CD14-positive monocyte (primary cell): ENCODE measurements at regions of chr20 and their contacts with region 1.

Region 1: GRCh38 chr20:38221119-38221589 is 39.4 kb downstream of the KIAA1755 start:
- DNase-seq: peak; percentile 55 to 68 (median 66)
- H3K4me3 ChIP-seq: no peak overlapping the region
- H3K4me3 Mint-ChIP-seq: peak overlapping the region; percentile 50 to 60
- H3K27ac ChIP-seq: no peak overlapping the region
- H3K27ac Mint-ChIP-seq: peak overlapping the region in 2 of 7 donors; percentile 59 to 63
- H3K4me1 ChIP-seq: peaks cover 20 to 22% of the 10 kb centered on the region in 2 donors
- H3K4me1 Mint-ChIP-seq: peaks cover 37% of the 10 kb centered on the region
- H3K27me3 ChIP-seq: no peaks in the 10 kb centered on the region
- H3K27me3 Mint-ChIP-seq: peaks cover 0 to 4% (median 3%) of the 10 kb centered on the region in 3 donors
- CTCF ChIP-seq: peak; percentile 93

Region 2: DNA sequence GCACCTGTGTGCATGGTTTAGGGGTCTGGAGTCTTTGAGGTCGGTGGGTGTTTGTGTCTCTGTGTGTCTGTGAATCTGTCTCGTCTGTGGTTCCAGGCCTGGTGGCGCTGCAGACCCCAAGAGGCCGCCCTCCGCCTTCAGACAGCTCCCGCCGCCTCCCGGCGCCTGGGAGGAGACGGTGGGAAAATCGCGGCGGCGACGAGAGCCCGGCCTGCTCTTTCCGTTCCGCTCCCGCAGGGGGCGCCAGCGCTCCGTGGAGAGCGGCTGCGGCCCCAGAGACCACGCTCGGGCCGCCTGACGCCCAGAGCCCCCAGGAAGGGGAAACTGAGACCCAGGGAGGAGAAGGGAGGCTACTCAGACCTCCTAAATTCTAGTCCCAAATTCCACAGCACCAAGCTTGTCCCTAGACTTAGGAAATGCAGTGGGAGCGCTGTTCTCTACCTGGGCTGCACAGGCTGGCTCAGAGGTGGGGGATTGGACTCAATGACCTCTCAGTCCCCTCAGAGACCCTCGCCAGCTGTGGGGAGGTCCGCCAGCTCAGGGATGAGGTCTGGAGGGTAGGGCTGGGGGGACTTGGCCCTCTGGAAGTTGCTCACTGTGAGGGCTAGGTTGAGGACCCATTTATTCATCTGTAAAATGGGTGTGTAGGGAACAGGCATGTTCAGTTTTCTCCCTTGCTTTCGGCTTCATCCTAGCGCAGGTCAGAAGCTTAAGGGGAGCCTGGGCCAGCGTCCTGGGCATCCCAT is 656.6 kb before region 1 on chr20:
- intact Hi-C with region 1: loop called in 1 of 2 experiments (anchors 5 kb)
- DNase-seq: peak in 2 of 3 donors; percentile 15 to 23
- H3K4me3 ChIP-seq: no peak overlapping the region
- H3K4me3 Mint-ChIP-seq: peak overlapping the region in 1 of 2 donors; percentile 68
- H3K27ac ChIP-seq: no peak overlapping the region
- H3K27ac Mint-ChIP-seq: no peak overlapping the region
- H3K4me1 ChIP-seq: no peaks in the 10 kb centered on the region
- H3K4me1 Mint-ChIP-seq: peaks cover 6% of the 10 kb centered on the region
- H3K27me3 ChIP-seq: peaks cover 9 to 38% of the 10 kb centered on the region in 2 donors
- H3K27me3 Mint-ChIP-seq: peaks cover 40 to 71% (median 41%) of the 10 kb centered on the region in 3 donors
- CTCF ChIP-seq: peak; percentile 93

Region 3: GRCh38 chr20:38033310-38034107 is 187.6 kb before region 1 on chr20 and contains the starts of genes RPRD1B and TTI1:
- intact Hi-C with region 1: no loop called
- DNase-seq: peak; percentile 82 to 90 (median 86)
- H3K4me3 ChIP-seq: peak within 1 kb of the TSS; percentile 64 to 93 (median 85)
- H3K4me3 Mint-ChIP-seq: peak within 1 kb of the TSS; percentile 94 to 95
- H3K27ac ChIP-seq: peak within 1 kb of the TSS; percentile 79 to 99
- H3K27ac Mint-ChIP-seq: peak within 1 kb of the TSS; percentile 95 to 100 (median 100)
- H3K4me1 ChIP-seq: peaks cover 30 to 41% of the 10 kb centered on the region in 2 donors
- H3K4me1 Mint-ChIP-seq: peaks cover 55% of the 10 kb centered on the region
- H3K27me3 ChIP-seq: no peaks in the 10 kb centered on the region
- H3K27me3 Mint-ChIP-seq: peaks cover 0 to 1% (median 0%) of the 10 kb centered on the region in 3 donors
- CTCF ChIP-seq: no peak
- polyA plus RNA-seq, gene RPRD1B: 3.6 to 12.3 (median 4.7) TPM
- polyA plus RNA-seq, gene TTI1: 6.4 to 9.1 (median 8.8) TPM

Region 4: DNA sequence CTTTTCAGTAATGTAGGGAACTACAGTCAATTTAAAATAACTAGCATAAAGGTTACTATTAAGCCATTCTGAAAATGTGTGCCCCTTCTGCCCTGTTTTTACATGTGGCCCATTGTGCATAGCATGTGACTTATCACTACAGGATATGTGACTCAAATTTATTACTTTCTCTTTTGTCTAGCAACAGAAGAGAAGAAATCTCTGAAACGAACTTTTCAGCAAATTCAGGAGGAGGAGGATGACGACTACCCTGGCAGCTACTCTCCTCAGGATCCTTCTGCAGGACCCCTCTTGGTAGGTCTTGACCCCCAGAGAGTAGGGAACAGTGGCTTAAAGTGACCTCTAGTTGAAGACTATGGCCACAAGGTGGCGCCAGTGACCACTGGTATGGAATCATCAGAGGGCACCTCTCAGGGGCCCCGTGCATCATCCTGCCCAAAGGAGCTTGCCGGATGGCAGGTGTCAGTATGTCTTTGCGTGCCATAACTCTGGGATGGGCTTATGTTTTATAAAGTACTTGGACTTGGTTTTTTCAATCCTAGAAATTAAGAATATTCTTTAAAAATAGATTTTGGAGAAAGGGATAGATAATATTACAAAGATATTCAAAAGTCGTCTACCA is 163.7 kb before region 1 on chr20:
- intact Hi-C with region 1: loop called (anchors 1 to 5 kb)
- DNase-seq: peak; percentile 64 to 86 (median 70)
- H3K4me3 ChIP-seq: no peak overlapping the region
- H3K4me3 Mint-ChIP-seq: no peak overlapping the region
- H3K27ac ChIP-seq: no peak overlapping the region
- H3K27ac Mint-ChIP-seq: peak overlapping the region in 1 of 7 donors; percentile 77
- H3K4me1 ChIP-seq: no peaks in the 10 kb centered on the region
- H3K4me1 Mint-ChIP-seq: peaks cover 7% of the 10 kb centered on the region
- H3K27me3 ChIP-seq: no peaks in the 10 kb centered on the region
- H3K27me3 Mint-ChIP-seq: no peaks in the 10 kb centered on the region
- CTCF ChIP-seq: peak; percentile 100

Region 5: DNA sequence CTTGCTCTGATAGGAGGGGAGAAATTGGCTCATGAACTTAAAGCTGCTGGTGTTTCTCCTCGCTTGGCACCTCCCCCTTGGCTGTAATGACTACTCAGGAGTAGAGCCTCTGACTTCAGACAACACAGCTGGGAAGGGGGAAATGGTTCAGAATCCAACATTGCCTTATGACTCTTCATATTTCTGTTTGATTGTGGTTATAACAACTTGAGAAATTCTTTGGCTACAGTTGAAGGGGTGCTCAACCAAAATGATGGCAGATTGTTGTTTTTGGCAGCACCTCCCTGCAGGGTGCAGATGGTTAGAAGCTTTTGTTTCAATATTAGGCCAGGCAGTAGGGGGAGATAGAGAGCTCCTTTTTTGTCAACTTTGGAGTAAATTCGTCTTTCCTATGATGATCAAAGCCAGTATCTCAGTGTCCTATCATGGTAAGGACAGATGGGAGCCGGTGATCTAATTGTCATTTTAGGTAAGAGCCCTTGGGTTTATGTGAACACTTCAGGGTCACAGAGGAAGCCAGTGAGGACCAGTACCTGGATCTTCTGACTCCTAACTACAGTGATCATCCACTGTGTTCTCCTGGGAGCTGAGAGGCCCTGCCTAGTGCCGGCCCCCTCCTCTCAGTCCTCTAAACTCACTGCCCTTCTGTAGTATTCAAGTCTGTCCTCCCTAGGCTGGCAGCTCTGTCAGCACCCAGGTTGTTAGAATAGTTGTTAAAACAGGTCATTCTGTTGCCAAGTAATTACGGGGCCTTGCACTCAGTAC is 147.7 kb before region 1 on chr20:
- intact Hi-C with region 1: loop called (anchors 2 to 5 kb)
- DNase-seq: peak; percentile 37 to 44 (median 38)
- H3K4me3 ChIP-seq: no peak overlapping the region
- H3K4me3 Mint-ChIP-seq: no peak overlapping the region
- H3K27ac ChIP-seq: no peak overlapping the region
- H3K27ac Mint-ChIP-seq: peak overlapping the region in 2 of 7 donors; percentile 28 to 84
- H3K4me1 ChIP-seq: no peaks in the 10 kb centered on the region
- H3K4me1 Mint-ChIP-seq: peaks cover 2% of the 10 kb centered on the region
- H3K27me3 ChIP-seq: no peaks in the 10 kb centered on the region
- H3K27me3 Mint-ChIP-seq: no peaks in the 10 kb centered on the region
- CTCF ChIP-seq: peak; percentile 86

Region 6: GRCh38 chr20:38113401-38114325 is 107.5 kb before region 1 on chr20:
- intact Hi-C with region 1: loop called in 1 of 2 experiments (anchors 5 kb)
- DNase-seq: peak; percentile 56 to 60 (median 60)
- H3K4me3 ChIP-seq: no peak overlapping the region
- H3K4me3 Mint-ChIP-seq: peak overlapping the region; percentile 13 to 70
- H3K27ac ChIP-seq: no peak overlapping the region
- H3K27ac Mint-ChIP-seq: peak overlapping the region in 6 of 7 donors; percentile 4 to 78 (median 51)
- H3K4me1 ChIP-seq: peaks cover 13 to 18% of the 10 kb centered on the region in 2 donors
- H3K4me1 Mint-ChIP-seq: peaks cover 49% of the 10 kb centered on the region
- H3K27me3 ChIP-seq: no peaks in the 10 kb centered on the region
- H3K27me3 Mint-ChIP-seq: no peaks in the 10 kb centered on the region
- CTCF ChIP-seq: peak; percentile 55

Region 7: DNA sequence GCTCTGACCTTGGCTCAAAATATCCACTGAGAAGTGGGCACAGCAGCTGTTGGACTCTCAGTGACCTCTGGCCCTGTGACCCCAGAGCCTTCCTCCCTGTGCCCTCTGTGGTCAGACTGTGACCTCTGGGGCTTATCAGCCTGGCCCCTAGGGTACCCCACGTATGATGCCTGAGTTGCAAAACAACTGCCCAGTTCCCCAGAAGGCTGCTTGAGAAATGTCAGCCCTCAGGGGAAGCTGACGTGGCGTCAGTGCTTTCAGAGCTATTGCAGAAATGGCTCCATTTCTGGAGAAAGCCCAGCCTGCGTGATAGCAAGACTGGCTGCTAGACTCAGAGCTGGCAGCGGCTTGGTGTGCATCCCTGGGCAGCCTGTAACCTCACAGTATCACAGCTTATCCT is 24.6 kb before region 1 on chr20:
- intact Hi-C with region 1: no loop called
- DNase-seq: peak; percentile 91 to 98 (median 95)
- H3K4me3 ChIP-seq: peak overlapping the region in 1 of 3 experiments; percentile 10
- H3K4me3 Mint-ChIP-seq: peak overlapping the region in 1 of 2 donors; percentile 48
- H3K27ac ChIP-seq: peak overlapping the region; percentile 87 to 88
- H3K27ac Mint-ChIP-seq: peak overlapping the region; percentile 94 to 96 (median 95)
- H3K4me1 ChIP-seq: peaks cover 42 to 51% of the 10 kb centered on the region in 2 donors
- H3K4me1 Mint-ChIP-seq: peaks cover 59% of the 10 kb centered on the region
- H3K27me3 ChIP-seq: no peaks in the 10 kb centered on the region
- H3K27me3 Mint-ChIP-seq: peaks cover 3 to 6% (median 3%) of the 10 kb centered on the region in 3 donors
- CTCF ChIP-seq: no peak